Cardiac septum (tissue), 1 donor: ENCODE measurements at regions of chr12 and their contacts with region 1.

Region 1: GRCh38 chr12:109385339-109386067 is 37.8 kb downstream of the MYO1H start:
- DNase-seq: no peak

Region 2: DNA sequence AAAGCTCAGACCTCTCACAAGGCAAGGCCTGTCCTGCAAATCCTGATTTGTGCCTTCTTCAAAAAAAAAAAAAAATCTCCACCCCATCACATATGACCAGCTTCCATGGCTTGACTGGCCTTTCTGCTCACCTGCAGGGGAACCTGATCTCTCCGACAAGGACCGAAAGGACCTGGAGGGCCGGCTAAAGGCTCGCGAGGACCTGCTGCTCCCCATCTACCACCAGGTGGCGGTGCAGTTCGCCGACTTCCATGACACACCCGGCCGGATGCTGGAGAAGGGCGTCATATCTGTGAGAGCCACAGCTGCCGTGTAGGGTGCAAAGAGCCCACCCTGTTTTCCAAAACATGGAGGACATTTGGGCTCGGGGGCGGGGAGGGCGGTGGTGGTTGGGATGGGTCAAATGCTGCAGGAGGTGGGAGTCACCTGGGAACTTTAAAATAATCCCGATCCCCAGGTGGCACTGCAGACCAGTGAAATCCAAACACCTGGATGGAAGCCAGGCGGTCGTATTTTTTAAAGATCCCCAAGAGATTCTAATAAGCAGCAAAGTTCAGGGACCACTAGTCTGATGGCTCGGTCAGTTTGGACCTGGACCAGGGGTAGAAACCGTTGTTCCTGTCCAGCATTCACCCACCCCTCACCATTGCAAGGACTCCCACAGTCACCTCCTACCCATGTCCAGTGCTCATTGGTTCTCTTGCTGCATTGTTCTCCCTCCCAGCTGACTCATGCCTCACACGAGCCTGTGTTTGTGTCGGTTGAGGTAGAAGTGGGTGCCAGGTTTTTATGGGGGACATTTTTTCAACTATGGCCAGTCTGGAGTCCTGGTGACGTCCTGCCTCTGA is 121.2 kb before region 1 on chr12:
- intact Hi-C with region 1: loop called (anchors 1 kb)
- DNase-seq: no peak